ENCODE measurements at regions of chr11 and their contacts with region 1.

Region 1: GRCh38 chr11:120229451-120230424 is 10.2 kb upstream of the POU2F3 start:
- DNase-seq: peak; percentile 52
- H3K4me3 Mint-ChIP-seq: no peak overlapping the region
- H3K27ac Mint-ChIP-seq: no peak overlapping the region
- H3K4me1 Mint-ChIP-seq: no peaks in the 10 kb centered on the region
- H3K27me3 Mint-ChIP-seq: peaks cover 42% of the 10 kb centered on the region

Region 2: GRCh38 chr11:120172054-120172911 is 57.5 kb before region 1 on chr11:
- CTCF ChIA-PET with region 1: interaction called, 33 read pairs
- DNase-seq: peak; percentile 65
- H3K4me3 Mint-ChIP-seq: no peak overlapping the region
- H3K27ac Mint-ChIP-seq: no peak overlapping the region
- H3K4me1 Mint-ChIP-seq: peaks cover 5% of the 10 kb centered on the region
- H3K27me3 Mint-ChIP-seq: peaks cover 79% of the 10 kb centered on the region